IMR-90 (cell line): ENCODE measurements at regions of chr17 and their contacts with region 1.

Region 1: DNA sequence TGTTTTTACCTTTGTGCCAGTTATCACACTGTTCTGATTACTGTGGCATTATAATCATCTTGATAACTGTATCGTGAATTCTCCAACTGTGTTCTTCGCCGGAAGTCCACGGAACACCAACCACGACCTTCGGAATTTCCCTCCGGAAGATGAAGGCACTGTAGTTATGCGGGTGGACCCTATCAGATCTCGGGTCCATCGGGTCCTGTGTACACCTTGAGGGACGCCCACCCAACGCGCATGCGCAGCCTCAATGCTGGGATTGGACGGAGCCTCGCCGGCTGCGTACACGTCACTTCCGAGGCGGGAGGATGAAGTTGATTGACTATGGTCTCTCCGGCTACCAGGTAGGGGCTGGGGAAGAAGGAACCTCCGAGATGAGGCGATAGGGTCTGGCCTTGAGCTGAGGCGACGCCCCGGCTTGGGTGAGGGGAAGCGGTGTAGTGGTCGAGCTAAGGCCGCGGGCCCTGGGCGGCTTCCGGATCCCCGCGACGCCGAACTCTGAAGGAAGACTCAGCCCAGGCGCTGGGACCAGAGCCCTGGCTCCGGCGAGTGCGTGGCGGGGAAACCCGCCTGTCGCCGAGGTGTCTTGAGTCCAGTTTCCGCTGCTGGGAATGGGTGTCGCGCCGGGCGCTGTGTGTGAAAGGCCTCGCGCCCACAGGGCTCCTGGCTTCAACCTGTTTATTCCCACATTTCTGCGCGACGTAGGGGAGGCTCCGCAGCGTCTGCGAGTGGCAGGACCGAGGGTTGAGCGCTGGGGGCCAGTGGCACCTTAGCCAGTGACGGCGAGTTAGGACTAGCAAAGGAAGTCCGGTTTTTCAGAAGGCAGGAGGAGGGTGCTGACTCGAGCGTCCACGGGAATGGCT is at the start of gene DHRS7B:
- DNase-seq: peak; percentile 88
- ATAC-seq: peak; percentile 93
- H3K4me3 ChIP-seq: peak within 1 kb of the TSS; percentile 64
- H3K27ac ChIP-seq: peak within 1 kb of the TSS; percentile 62
- H3K4me1 ChIP-seq: no peaks in the 10 kb centered on the region
- H3K27me3 ChIP-seq: no peaks in the 10 kb centered on the region
- CTCF ChIP-seq: no peak
- POLR2A ChIP-seq: peak; percentile 70
- RAD21 ChIP-seq: no peak
- total RNA-seq, gene DHRS7B: 24.2 and 34.4 TPM in 2 replicates

Region 2: DNA sequence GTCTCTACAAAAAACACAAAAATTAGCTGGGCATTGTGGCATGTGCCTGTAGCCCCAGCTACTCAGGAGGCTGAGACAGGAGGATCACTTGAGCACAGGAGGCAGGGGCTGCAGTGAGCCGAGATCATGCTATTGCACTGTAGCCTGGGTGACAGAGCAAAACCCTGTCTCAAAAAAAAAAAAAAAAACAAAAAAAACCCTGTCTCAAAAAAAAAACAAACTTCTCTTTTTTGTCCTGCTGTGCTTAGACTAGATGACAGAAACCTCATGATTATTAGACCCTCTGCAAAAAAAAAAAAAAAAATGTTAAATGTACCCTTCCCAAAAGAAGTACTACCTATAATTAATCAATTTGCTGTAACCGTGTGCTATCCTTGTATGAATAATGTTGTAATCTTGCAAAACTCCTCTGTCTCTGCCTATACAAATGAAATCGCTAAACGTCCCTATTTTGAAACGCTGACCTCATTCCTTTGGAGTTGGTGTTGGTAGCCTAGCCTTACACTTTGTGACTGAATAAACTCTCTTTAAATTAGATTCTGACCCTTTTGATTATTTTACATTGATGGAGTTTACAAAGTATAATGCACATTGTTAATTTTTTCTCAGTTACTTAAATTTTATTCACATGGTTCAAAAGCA is 13.7 kb before region 1 on chr17:
- CTCF ChIA-PET with region 1: no interaction called
- POLR2A ChIA-PET with region 1: no interaction called
- dilution Hi-C with region 1: no loop called
- in situ Hi-C with region 1: no loop called
- intact Hi-C with region 1: no loop called
- DNase-seq: no peak
- ATAC-seq: no peak
- H3K4me3 ChIP-seq: no peak overlapping the region
- H3K27ac ChIP-seq: no peak overlapping the region
- H3K4me1 ChIP-seq: no peaks in the 10 kb centered on the region
- H3K27me3 ChIP-seq: peaks cover 27% of the 10 kb centered on the region
- CTCF ChIP-seq: no peak
- POLR2A ChIP-seq: no peak
- RAD21 ChIP-seq: no peak

Region 3: GRCh38 chr17:21252796-21253645 is 126.1 kb after region 1 on chr17 and contains the start of gene NATD1:
- CTCF ChIA-PET with region 1: no interaction called
- POLR2A ChIA-PET with region 1: no interaction called
- dilution Hi-C with region 1: no loop called
- in situ Hi-C with region 1: no loop called
- intact Hi-C with region 1: loop called (anchors 5 kb)
- DNase-seq: peak; percentile 78
- ATAC-seq: peak; percentile 71
- H3K4me3 ChIP-seq: peak within 1 kb of the TSS; percentile 50
- H3K27ac ChIP-seq: peak within 1 kb of the TSS; percentile 21; the same call in 1 of the 2 replicates
- H3K4me1 ChIP-seq: peaks cover 8% of the 10 kb centered on the region
- H3K27me3 ChIP-seq: no peaks in the 10 kb centered on the region
- CTCF ChIP-seq: no peak
- POLR2A ChIP-seq: no peak
- RAD21 ChIP-seq: no peak
- total RNA-seq, gene NATD1: 0.56 and 0.90 TPM in 2 replicates

Region 4: DNA sequence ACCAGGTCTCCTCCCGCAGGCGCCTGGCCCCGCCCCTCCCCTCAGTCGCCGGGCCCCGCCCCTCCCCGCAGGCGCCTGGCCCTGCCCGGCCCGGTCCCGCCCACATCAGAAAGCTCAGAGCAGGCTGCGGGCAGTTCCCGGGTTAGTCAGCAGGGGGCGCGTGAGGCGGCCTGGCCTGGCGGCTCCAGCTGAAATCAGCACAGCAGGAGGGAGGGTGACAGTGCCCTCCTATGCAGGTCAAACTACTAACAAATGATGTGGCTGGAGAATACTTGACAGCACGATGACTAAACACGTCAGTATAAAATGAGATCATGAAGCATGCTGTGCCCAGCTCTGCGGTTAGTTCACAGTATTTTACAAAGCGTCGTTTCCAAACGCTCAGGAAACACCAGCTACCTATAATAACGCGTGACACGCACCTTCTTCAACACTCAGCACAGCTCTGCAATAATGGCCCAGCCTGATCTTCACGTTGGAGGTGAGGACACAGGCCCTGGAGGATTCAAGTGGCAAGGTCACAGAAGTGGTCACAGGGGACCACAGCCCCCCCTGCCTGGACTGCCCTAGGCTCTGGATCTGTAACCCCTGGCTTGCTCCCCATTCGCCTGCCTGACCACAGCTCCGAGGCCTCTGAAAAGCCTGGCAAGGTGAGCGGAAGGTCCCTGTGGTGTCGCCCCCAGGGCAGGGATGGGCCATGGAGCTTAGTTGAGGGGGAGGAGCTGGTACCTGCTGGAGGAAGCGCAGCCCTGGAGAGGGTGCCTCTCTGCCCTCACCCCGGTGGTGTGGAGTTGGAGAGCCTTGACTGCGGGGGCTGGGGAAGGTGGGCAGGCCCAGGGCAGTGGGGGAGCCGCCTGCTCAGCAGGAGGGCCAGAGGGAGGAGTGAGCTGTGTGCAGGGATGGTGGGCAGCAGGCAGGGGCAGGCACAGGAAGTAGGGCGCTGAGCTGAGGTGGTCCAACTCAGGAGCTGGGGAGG is 330.5 kb after region 1 on chr17:
- CTCF ChIA-PET with region 1: interaction called, 3 read pairs
- POLR2A ChIA-PET with region 1: no interaction called
- dilution Hi-C with region 1: no loop called
- in situ Hi-C with region 1: no loop called
- intact Hi-C with region 1: loop called (anchors 5 kb)
- DNase-seq: peak; percentile 89
- ATAC-seq: peak; percentile 97
- H3K4me3 ChIP-seq: no peak overlapping the region
- H3K27ac ChIP-seq: no peak overlapping the region
- H3K4me1 ChIP-seq: peaks cover 4% of the 10 kb centered on the region; the same call in 1 of the 2 replicates
- H3K27me3 ChIP-seq: peaks cover 42% of the 10 kb centered on the region
- CTCF ChIP-seq: peak; percentile 89
- POLR2A ChIP-seq: no peak
- RAD21 ChIP-seq: peak; percentile 74